Endothelial cell of umbilical vein (primary cell): ENCODE measurements at regions of chr11 and their contacts with region 1.

Region 1: DNA sequence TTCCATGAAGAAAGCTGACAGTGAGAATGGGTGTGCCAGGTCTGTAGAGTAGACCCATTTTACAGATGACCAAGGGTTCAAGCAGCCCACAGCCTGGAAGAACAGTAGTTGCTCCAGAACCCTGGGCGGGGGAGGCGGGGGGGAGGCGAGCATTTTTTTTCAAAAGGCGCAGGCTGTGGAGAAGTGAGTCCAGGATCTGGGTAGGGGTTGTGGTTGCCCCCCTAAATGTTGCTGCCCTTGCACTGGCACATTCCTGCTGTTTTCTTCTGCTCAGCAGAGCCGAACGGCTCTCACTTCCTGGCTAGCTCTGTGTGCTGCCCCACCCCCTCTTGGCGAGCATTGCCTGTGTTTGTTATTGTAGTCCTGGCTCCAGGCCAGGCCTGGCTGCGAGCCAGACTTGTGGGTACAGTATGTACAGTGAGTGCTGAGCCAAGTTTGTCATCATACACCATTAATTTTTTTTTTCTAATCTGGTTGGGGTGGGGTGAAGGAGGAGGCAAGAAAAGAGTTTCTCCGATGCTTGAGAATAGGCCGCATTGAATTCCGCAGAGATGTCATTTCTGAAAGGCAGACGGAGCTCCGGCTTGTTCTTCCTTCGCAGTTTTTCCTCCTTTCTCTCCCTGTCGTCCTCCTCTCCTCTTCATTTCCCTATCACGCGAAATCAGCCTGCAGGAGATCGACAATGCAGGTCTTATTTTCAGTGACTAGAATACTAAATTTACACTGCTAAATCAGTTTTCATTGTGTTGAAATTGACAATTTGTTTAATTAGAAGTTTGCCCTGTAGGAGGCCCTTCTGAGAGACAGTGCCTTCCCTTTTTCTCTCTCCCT is 100.5 kb downstream of the ZBTB16 start:
- DNase-seq: peak; percentile 99
- H3K4me3 ChIP-seq: peak overlapping the region in 1 of 3 experiments; percentile 6
- H3K27ac ChIP-seq: peak overlapping the region; percentile 91
- H3K4me1 ChIP-seq: peaks cover 54% of the 10 kb centered on the region
- H3K27me3 ChIP-seq: no peaks in the 10 kb centered on the region
- CTCF ChIP-seq: no peak
- POLR2A ChIP-seq: peak; percentile 73

Region 2: DNA sequence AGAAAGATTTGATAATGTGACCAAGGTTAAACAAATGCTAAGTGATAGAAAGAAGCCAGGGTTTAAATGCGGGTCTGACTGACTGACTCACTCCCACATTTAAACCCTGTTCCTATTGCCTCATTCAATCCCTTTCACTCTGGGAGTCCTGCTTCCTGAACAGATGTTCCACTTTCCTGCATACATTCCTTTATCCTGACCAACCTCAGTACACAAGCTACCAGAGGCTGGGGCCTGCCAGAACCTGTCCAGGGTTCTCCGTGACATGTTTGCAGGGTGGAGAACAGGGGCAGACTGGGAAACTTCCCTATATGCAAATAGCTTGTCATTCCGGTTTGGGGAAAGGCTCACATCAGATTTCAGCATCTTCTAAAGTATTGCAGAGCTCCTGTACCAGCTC is 775.5 kb before region 1 on chr11:
- CTCF ChIA-PET with region 1: no interaction called
- POLR2A ChIA-PET with region 1: no interaction called
- dilution Hi-C with region 1: no loop called
- intact Hi-C with region 1: loop called (anchors 10 kb)
- DNase-seq: peak; percentile 94
- H3K4me3 ChIP-seq: no peak overlapping the region
- H3K27ac ChIP-seq: peak overlapping the region; percentile 70
- H3K4me1 ChIP-seq: peaks cover 24% of the 10 kb centered on the region
- H3K27me3 ChIP-seq: peaks cover 2% of the 10 kb centered on the region in 2 experiments
- CTCF ChIP-seq: no peak
- POLR2A ChIP-seq: peak; percentile 46

Region 3: DNA sequence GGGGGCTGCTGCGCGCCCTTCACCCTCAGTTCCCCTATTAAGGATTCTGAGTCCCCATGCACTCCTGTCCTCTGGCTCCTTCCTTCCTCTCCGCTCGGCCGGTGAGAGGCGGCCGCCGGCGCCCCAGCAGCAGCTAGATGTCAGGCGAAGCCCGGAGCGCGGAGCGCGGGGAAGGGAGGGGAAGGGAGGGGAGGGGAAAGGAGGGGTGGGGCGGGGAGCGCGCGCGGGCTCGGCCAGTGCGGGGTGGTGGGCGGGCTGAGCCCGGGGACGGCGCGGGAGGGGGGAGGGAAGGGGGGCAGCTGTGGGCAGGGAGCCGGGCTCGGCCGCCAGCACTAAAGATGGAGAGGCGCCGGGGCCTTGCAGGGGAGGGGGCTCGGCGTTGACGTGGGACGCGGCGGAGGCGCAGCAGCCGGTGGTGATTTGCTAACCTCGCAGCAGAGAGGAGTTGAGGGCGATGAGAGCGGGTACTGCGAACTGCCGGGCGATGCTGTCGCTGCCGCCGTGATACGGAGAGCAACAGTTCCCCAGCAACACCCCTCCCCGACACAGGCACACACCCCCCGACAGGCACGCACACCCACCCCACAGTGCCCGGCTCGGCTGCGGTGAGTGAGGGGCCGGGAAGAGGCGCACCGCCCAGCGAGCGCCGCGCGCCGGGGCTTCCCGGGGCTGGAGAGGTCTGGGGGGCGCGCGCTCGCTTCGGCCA is 100.6 kb before region 1 on chr11 and contains the start of gene ZBTB16:
- CTCF ChIA-PET with region 1: interaction called, 8 read pairs
- POLR2A ChIA-PET with region 1: no interaction called
- dilution Hi-C with region 1: no loop called
- intact Hi-C with region 1: loop called (anchors 1 kb)
- DNase-seq: peak; percentile 83
- H3K4me3 ChIP-seq: peak within 1 kb of the TSS; percentile 86 to 90 (median 87)
- H3K27ac ChIP-seq: peak within 1 kb of the TSS; percentile 78
- H3K4me1 ChIP-seq: peaks cover 8% of the 10 kb centered on the region
- H3K27me3 ChIP-seq: peaks cover 0 to 2% of the 10 kb centered on the region in 2 experiments
- CTCF ChIP-seq: peak; percentile 4 to 29
- POLR2A ChIP-seq: no peak
- total RNA-seq, gene ZBTB16: 19.5 and 20.3 TPM in 2 replicates

Region 4: GRCh38 chr11:114110952-114111947 is 48.8 kb before region 1 on chr11:
- CTCF ChIA-PET with region 1: no interaction called
- POLR2A ChIA-PET with region 1: no interaction called
- dilution Hi-C with region 1: no loop called
- intact Hi-C with region 1: loop called (anchors 1 kb)
- DNase-seq: peak; percentile 75
- H3K4me3 ChIP-seq: peak overlapping the region in 1 of 3 experiments; percentile 32
- H3K27ac ChIP-seq: peak overlapping the region; percentile 25
- H3K4me1 ChIP-seq: peaks cover 20% of the 10 kb centered on the region
- H3K27me3 ChIP-seq: peaks cover 2% of the 10 kb centered on the region in 2 experiments
- CTCF ChIP-seq: no peak
- POLR2A ChIP-seq: no peak

Region 5: DNA sequence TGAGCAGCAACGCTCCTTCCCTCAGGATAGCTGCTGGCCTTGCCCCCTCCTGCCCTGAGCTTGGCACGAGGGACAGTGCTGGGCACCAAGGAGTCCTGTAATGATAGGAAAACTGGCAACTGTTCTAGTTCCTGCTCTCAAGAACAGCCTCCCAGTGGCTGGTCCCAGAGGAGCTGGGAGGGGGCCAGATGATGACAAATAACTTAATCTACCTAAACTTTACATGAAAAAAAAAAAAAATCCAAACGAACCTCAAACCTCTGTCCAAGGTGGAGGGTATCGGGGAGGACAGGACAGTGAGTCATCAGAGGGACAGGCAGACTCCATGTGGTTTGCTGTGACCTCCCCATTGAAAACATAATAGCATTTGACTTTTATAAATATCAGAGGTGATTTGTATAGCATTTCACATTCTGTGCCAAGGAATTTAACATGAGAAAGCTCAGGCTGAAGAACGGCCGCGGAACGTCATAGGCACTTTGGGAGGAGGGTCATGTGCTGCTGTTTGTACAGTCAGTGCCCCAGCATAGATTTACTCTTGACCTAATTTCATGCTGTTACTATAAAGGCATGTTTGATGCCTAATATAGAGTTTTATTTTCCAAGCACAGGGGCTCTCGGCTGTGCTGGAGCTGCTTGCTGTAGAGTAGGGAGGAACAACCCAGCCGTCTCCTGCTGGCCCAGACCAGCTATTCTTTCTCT is 37.9 kb after region 1 on chr11:
- CTCF ChIA-PET with region 1: interaction called, 6 read pairs
- POLR2A ChIA-PET with region 1: interaction called, 3 read pairs
- dilution Hi-C with region 1: no loop called
- intact Hi-C with region 1: loop called (anchors 1 kb)
- DNase-seq: peak; percentile 96
- H3K4me3 ChIP-seq: no peak overlapping the region
- H3K27ac ChIP-seq: peak overlapping the region; percentile 83
- H3K4me1 ChIP-seq: peaks cover 26% of the 10 kb centered on the region
- H3K27me3 ChIP-seq: no peaks in the 10 kb centered on the region
- CTCF ChIP-seq: no peak
- POLR2A ChIP-seq: peak; percentile 21

Region 6: DNA sequence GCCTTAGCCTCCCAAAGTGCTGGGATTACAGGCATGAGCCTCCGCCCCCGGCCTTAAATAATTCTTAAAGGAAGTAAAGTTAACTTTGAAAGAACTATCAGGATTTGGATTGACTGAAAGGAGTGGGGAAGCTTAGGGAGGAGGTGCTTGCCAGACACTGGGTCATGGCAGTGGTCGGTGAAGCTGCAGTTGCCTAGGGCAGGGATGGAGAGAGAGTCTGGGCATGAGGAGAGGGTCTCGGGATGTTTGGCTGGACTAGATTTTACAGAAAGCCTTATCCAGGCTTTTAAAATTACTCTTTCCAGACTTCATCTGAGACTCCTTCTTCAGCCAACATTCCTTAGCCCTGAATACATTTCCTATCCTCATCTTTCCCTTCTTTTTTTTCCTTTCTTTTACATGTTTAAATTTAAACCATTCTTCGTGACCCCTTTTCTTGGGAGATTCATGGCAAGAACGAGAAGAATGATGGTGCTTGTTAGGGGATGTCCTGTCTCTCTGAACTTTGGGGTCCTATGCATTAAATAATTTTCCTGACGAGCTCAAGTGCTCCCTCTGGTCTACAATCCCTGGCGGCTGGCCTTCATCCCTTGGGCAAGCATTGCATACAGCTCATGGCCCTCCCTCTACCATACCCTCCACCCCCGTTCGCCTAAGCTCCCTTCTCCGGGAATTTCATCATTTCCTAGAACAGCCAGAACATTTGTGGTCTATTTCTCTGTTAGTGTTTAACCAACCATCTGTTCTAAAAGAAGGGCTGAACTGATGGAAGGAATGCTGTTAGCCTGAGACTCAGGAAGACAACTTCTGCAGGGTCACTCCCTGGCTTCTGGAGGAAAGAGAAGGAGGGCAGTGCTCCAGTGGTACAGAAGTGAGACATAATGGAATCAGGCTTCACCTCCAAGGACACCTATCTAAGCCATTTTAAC is 135.9 kb after region 1 on chr11 and contains the start of gene NNMT:
- CTCF ChIA-PET with region 1: no interaction called
- POLR2A ChIA-PET with region 1: interaction called, 4 read pairs
- dilution Hi-C with region 1: no loop called
- intact Hi-C with region 1: loop called (anchors 1 kb)
- DNase-seq: peak; percentile 97
- H3K4me3 ChIP-seq: peak within 1 kb of the TSS; percentile 85 to 99 (median 96)
- H3K27ac ChIP-seq: peak within 1 kb of the TSS; percentile 100
- H3K4me1 ChIP-seq: peaks cover 70% of the 10 kb centered on the region
- H3K27me3 ChIP-seq: no peaks in the 10 kb centered on the region
- CTCF ChIP-seq: peak in 1 of 2 donors; percentile 11
- POLR2A ChIP-seq: peak; percentile 86
- total RNA-seq, gene NNMT: 300 and 330 TPM in 2 replicates